A673 (cell line): ENCODE measurements at regions of chr22 and their contacts with region 1.

Region 1: GRCh38 chr22:46122511-46122971 is 27.8 kb upstream of the PPARA start:
- DNase-seq: peak; percentile 76
- H3K4me3 ChIP-seq: peak overlapping the region; percentile 23
- H3K27ac ChIP-seq: no peak overlapping the region
- H3K4me1 ChIP-seq: no peaks in the 10 kb centered on the region
- H3K27me3 ChIP-seq: no peaks in the 10 kb centered on the region
- CTCF ChIP-seq: peak; percentile 98

Region 2: DNA sequence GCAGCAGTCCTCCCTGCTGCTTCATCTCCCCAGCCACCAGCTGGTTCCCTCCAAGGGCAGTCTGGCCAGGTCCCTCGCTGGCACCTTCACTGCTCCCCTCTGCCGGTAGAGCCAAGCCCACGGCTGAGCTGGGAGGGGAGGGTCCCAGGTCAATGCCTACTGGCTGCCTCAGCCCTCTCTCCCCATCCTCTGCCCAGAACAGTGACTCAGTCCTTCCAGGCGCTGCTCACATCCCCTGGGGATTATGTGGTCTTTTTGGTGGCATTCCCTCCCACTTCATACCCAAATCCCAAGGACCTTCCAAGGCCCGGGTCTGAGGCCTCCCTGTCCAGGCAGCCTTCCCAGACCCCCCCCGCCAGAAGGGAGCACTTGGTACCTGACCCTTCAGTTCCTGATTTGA is 190.5 kb before region 1 on chr22:
- CTCF ChIA-PET with region 1: no interaction called
- POLR2A ChIA-PET with region 1: no interaction called
- intact Hi-C with region 1: no loop called
- DNase-seq: no peak
- H3K4me3 ChIP-seq: no peak overlapping the region
- H3K27ac ChIP-seq: no peak overlapping the region
- H3K4me1 ChIP-seq: peaks cover 7% of the 10 kb centered on the region
- H3K27me3 ChIP-seq: peaks cover 6% of the 10 kb centered on the region
- CTCF ChIP-seq: no peak

Region 3: DNA sequence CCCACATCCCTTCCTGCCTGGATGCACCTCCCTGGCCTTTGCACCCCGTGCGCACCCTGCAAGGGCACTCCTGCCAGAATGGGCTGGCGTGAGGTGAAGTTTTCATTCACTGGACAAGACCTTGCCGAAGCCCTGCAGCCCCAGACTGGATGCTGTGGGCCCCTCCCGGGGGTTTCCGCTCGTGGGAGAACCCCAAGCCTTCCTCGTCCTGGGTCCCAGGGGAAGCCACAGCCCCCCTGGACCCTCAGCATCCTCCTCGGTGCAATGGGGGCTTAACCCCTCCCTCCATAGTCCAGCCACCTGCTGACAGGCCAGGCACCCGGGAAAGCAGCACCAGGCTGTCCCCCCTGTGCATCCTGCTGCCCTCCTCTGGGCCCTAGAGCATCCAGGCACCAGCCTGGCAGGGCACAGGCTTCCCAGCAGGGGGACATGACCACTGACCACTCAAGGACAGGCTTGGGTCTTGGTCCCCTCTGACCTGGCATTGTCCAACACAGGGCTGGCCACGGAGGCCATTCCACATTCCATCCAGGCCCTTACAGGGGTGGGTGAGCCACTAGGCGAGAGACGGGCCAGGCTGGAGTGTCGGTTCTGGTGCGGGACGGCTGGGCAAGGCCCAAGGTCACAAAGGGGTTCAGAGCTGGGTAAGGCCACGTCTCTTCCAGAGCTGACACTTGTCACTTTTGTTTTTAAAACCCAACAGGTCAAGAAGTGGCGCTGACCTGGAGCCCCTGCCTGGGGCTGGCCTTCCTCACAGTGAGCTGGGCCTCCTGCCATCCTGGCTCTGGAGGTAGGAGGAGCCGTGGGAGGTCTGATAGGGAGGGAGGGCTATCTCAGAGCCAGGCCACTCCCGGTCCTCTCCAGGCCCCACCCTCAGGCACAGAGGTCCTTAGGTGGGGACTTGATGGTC is 13.7 kb before region 1 on chr22:
- CTCF ChIA-PET with region 1: no interaction called
- POLR2A ChIA-PET with region 1: no interaction called
- intact Hi-C with region 1: no loop called
- DNase-seq: peak; percentile 56
- H3K4me3 ChIP-seq: no peak overlapping the region
- H3K27ac ChIP-seq: peak overlapping the region; percentile 42
- H3K4me1 ChIP-seq: peaks cover 8% of the 10 kb centered on the region
- H3K27me3 ChIP-seq: no peaks in the 10 kb centered on the region
- CTCF ChIP-seq: no peak

Region 4: GRCh38 chr22:46187862-46188261 is 65.3 kb after region 1 on chr22:
- CTCF ChIA-PET with region 1: no interaction called
- POLR2A ChIA-PET with region 1: no interaction called
- intact Hi-C with region 1: no loop called
- DNase-seq: no peak
- H3K4me3 ChIP-seq: no peak overlapping the region
- H3K27ac ChIP-seq: no peak overlapping the region
- H3K4me1 ChIP-seq: no peaks in the 10 kb centered on the region
- H3K27me3 ChIP-seq: no peaks in the 10 kb centered on the region
- CTCF ChIP-seq: no peak

Region 5: DNA sequence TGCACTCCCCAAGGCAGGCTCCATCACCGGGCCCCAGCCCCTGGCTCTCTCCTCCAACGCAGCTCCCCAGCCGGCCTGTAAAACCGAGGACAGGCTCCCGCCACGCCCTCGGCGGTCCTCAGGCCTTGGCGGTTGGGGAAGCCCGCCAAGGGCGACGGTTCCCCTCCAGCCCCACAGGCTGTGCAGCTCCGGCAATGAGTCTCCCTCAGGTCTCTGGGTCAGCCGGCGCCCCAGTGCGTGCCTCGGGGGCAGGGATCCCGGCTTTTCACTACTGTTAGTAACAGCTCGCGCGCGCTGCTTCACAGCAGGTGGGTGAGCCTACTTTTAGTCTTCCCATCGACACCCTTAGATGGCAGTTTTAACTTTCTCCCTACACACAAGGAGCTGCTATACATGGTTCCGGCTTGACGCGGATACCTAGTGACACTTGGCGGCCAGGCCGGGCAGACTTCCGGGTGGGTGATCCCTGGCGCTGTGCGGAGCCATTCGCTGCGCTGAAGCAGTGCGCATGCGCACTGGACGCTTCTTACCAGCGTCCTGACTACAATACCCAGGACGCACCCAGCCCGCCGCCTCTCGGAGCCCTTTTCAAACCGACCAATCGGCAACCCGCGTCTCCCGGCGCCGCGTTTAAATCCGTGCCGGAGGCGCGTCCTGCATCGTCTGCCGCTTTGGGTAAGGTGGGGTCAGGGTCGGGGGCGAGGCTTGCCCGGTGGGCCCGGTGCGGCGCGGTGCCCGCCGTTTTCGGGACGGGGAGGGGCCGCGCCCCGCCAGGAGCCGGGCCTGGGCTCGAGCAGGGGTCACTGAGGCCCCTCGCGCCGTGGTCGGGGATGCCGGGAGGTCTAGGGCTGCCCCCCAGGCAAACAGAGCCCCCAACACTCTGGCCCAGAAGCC is 174.0 kb after region 1 on chr22 and contains the start of gene GTSE1:
- CTCF ChIA-PET with region 1: interaction called, 4 read pairs
- POLR2A ChIA-PET with region 1: no interaction called
- intact Hi-C with region 1: loop called (anchors 1 kb)
- DNase-seq: peak; percentile 99
- H3K4me3 ChIP-seq: peak within 1 kb of the TSS; percentile 79
- H3K27ac ChIP-seq: peak within 1 kb of the TSS; percentile 86
- H3K4me1 ChIP-seq: peaks cover 28% of the 10 kb centered on the region
- H3K27me3 ChIP-seq: no peaks in the 10 kb centered on the region
- CTCF ChIP-seq: peak; percentile 39
- total RNA-seq, gene GTSE1: 87.3 and 88.1 TPM in 2 replicates

Region 6: DNA sequence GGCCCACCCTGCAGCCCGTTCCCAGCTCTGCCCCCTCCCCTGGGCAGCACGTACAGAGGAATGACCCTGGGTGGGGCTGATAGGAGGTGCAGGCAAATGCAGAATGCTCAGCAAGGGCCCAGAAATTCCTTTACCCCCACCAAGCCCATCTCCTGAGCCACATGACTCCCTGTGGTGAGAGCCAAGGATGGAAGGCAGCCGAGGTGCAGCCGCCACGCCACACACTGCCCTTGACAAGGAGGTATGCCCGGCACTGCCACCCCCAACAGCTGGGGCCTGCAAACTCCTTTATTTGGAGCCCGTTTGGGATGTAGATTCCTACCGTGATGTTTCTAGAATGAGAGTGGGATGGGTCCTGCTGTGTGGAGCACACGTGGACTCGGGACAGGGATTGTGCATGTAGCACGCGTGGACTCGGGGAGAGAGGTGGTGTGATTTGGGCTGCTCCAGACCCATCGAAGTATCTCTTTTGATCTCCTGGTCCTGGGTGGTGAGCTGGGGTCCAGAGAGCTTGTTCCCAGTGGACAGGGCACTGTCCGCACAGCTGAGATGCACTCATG is 187.1 kb after region 1 on chr22:
- CTCF ChIA-PET with region 1: no interaction called
- POLR2A ChIA-PET with region 1: no interaction called
- intact Hi-C with region 1: loop called (anchors 1 kb)
- DNase-seq: no peak
- H3K4me3 ChIP-seq: no peak overlapping the region
- H3K27ac ChIP-seq: no peak overlapping the region
- H3K4me1 ChIP-seq: no peaks in the 10 kb centered on the region
- H3K27me3 ChIP-seq: no peaks in the 10 kb centered on the region
- CTCF ChIP-seq: no peak

Region 7: DNA sequence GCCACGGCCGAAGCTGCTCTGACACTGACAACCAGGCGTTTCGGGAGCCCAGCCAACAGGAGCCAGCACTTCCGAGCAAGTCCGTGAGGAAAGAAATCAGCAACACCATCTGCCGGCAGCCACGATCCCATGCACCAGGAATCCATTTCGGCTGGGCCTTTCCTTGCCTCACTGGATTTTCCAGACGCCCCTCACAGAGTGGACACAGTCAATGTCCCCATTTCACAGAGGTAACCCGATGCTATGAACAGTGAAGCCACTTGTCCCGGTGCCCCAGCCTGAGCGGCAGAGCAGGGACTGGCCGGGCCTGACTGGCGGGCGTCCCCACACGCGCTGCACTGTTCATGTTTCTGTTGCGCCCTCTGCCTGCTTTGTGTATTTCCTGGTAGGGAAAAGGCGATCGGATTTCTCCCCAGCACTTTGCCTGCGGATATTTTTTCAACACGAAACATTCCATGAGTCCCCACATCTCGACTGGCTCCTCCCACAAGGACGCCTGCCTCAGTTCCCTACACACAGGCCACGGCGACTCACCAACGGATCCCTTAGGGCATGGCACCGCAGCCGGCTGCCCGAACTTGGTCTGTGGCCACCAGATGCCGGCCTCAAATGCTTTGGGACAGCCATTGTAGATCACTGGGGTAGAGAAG is 268.2 kb after region 1 on chr22:
- CTCF ChIA-PET with region 1: no interaction called
- POLR2A ChIA-PET with region 1: no interaction called
- intact Hi-C with region 1: loop called (anchors 5 kb)
- DNase-seq: peak; percentile 52
- H3K4me3 ChIP-seq: no peak overlapping the region
- H3K27ac ChIP-seq: no peak overlapping the region
- H3K4me1 ChIP-seq: no peaks in the 10 kb centered on the region
- H3K27me3 ChIP-seq: no peaks in the 10 kb centered on the region
- CTCF ChIP-seq: peak; percentile 55